Body of pancreas (tissue), 4 donors: ENCODE measurements at regions of chr3 and their contacts with region 1.

Region 1: DNA sequence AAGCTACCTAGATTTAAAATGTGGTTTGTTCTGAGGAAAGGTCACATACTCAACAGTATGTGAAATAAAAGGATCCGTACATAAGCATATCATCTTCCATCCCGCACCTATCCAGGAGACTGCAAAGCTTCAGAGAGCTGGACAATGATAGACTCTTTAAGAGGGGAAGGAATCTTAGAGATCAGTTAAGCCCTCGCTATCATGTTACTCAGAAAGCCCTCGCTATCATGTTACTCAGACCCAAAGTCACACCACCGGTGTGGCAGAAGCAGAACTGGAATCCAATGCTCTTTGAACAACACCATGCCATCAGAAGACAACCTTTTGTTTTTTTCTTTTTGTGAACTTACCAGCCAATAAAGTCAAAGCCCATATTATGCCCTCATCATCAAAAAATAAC is 5.8 kb downstream of the ANO10 start:
- DNase-seq: no peak
- ATAC-seq: no peak
- H3K4me3 ChIP-seq: no peak overlapping the region
- H3K27ac ChIP-seq: no peak overlapping the region
- H3K4me1 ChIP-seq: peaks cover 8% of the 10 kb centered on the region
- H3K27me3 ChIP-seq: no peaks in the 10 kb centered on the region
- CTCF ChIP-seq: no peak
- POLR2A ChIP-seq: no peak

Region 2: DNA sequence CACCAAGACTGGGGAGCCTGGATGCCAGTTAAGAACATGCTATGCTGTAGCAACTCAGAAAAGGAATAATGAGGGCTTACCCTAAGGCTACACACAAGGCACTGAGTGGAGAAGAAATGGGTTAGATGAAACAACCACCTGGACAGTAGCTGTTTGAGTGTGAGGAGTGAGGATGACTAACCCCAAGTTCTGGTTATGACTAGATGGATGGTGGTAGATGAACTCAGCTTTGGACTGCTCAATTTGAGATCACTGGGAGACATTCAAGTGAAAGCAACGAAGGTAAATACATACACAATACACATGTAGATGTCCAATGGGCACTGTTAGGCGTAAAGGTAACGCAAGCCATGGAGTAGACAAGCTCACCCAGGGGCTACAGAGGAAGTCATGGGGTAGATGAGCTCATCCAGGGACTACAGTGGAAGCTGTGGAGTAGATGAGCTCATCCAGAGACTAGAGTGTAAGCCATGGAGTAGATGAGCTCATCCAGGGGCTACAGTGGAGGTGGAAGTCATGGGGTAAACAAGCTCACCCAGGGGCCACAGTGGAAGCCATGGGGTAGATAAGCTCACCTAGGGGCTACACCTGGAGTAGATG is 92.5 kb before region 1 on chr3:
- intact Hi-C with region 1: no loop called
- DNase-seq: no peak
- ATAC-seq: no peak
- H3K4me3 ChIP-seq: no peak overlapping the region
- H3K27ac ChIP-seq: no peak overlapping the region
- H3K4me1 ChIP-seq: no peaks in the 10 kb centered on the region
- H3K27me3 ChIP-seq: no peaks in the 10 kb centered on the region
- CTCF ChIP-seq: no peak
- POLR2A ChIP-seq: no peak

Region 3: DNA sequence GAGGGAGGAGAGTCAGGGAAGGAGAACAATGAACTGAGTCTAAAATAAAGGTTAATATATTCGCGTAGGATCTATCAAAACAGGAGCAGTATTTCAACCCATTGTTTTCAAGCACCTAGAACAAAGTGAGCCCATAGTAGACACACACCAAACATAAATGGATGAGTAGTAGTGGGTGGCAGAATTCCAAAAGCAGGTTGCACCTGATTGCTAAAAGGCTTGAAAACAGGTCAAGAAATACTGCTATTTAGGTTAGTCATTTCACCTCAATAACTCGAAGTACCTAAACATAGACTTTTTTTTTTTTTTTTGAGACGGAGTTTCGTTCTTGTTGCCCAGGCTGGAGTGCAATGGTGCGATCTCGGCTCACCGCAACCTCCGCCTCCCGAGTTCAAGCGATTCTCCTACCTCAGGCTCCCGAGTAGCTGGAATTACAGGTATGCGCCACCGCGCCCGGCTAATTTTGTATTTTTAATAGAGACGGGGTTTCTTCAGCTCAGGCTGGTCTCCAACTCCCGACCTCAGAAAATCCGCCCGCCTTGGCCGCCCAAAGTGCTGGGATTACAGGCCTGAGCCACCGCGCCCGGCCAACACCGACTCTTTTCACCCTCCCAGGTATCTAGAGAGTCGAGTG is 73.8 kb after region 1 on chr3:
- intact Hi-C with region 1: loop called (anchors 10 kb)
- DNase-seq: peak in 1 of 4 donors; percentile 9
- ATAC-seq: peak; percentile 40
- H3K4me3 ChIP-seq: peak overlapping the region; percentile 60 to 71
- H3K27ac ChIP-seq: peak overlapping the region; percentile 86 to 99 (median 98)
- H3K4me1 ChIP-seq: peaks cover 39% of the 10 kb centered on the region
- H3K27me3 ChIP-seq: no peaks in the 10 kb centered on the region
- CTCF ChIP-seq: no peak
- POLR2A ChIP-seq: no peak